ENCODE measurements at regions of chr18 and their contacts with region 1.

Region 1: GRCh38 chr18:48621240-48621639 is 82.4 kb downstream of the CTIF start:
- DNase-seq: no peak
- CTCF ChIP-seq: no peak

Region 2: GRCh38 chr18:48605408-48605845 is 15.8 kb before region 1 on chr18:
- CTCF ChIA-PET with region 1: interaction called, 12 read pairs
- POLR2A ChIA-PET with region 1: no interaction called
- DNase-seq: peak; percentile 61
- CTCF ChIP-seq: peak; percentile 42